GM10248 (cell line): ENCODE measurements at regions of chr2 and their contacts with region 1.

Region 1: DNA sequence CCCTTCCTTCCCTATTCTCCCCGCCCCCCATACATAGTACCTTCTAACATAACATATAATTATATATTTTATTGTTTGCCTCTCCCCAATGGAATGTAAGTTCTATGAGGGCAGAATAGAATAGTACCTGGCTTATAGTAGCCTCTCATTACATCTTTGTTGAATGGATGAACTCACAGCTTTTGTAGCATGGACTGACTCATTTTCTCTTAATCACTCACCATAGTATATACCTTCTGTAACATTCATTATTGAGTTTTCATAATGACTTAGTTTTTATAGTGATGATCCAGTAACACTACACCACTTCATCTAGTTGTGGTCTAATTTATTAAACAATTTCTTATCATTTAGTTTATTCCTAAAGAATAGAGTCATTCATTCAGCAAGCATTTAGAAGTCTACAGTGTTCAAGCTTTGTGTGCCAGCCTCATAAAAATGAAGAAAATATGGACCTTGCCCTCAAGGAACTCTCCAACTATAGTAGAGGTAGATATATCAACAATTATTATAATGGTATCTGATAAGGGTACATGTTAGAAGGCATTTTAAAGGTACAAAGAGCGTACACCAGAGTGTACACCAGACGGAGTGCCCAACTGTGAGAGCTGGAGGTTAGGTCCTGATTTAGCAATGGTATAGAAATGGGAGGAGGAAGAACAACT is 31.1 kb downstream of the NCOA1 start:
- DNase-seq: no peak
- CTCF ChIP-seq: no peak

Region 2: GRCh38 chr2:24508878-24509277 is 13.2 kb before region 1 on chr2:
- CTCF ChIA-PET with region 1: interaction called, 11 read pairs
- POLR2A ChIA-PET with region 1: no interaction called
- DNase-seq: no peak
- CTCF ChIP-seq: no peak